Posterior cingulate gyrus (tissue), 11 donors: ENCODE measurements at regions of chr6 and their contacts with region 1.

Region 1: DNA sequence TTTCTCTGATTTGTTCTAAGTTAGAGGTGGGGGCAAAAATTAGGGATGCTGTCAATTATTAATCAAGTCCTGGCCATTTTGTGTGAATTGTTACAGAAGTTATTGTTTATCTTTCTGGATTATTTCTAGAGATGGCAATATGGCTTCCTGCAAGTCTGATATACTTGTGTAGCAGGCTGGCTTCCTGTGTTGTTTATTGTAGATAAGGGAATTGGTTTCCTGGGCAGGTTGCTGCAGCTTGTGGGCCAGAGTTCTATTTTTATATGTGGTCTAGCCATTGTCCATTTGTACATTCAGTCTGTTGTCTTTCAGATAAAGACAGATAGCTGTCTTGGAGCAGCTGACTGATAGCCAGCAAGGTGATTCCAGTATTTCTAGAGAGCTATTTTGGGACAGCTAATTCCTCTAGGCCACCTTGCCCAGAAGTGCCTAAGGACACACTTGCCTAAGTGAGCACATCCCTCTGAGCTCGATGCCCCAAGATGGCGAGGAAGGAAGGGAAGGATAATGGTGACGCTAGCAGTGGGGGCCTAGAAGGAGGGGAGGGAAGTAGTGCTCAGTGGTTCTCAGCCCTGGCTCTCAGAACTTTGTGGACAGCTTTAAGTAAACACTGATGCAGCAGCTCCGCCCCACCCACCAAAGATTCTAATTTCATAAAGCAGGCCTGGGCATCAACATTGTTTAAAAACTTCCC is 25.5 kb downstream of the DDO start:
- DNase-seq: no peak

Region 2: DNA sequence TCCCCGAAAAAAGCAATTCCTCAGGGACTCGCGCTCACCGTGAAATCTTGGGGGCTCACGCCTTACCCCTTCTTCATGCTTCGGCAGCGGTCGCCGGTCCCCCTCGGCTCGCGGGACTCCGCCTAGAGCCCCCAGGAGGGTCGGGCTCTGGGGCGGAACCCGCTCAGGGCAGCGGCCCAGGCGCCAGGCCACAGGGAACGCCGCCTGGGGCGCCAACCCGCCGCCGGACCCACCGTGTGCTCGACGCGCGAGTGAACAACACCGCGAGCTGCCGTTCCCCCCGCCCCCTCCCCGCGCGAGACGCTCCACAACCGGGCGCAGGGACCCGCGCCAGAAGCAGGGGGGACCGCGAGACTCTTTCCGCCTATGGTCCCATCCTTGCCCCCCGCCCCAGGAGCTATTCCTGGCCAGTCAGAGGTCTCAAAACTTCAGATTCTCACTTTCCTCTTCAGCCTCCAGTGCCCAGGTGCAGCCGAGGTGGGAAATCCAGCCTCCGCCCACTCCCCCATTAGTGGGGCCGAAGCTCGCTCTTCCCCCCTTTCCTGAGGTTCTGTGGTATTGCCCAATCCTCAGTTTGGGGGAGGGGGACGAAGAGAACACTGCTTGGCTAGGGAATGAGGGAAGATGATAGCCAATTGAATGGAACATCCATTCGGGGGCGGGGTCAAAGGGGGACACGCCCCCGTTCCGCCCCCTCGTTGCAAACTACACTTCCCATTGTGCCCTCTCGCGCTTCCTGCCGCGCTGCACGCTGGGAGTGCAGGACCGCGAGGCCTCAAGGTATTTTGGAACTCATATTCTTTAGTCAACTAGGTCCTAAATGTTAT is 210.2 kb before region 1 on chr6 and contains the start of gene WASF1:
- intact Hi-C with region 1: loop called (anchors 5 kb)
- DNase-seq: peak; percentile 91 to 99 (median 94)

Region 3: DNA sequence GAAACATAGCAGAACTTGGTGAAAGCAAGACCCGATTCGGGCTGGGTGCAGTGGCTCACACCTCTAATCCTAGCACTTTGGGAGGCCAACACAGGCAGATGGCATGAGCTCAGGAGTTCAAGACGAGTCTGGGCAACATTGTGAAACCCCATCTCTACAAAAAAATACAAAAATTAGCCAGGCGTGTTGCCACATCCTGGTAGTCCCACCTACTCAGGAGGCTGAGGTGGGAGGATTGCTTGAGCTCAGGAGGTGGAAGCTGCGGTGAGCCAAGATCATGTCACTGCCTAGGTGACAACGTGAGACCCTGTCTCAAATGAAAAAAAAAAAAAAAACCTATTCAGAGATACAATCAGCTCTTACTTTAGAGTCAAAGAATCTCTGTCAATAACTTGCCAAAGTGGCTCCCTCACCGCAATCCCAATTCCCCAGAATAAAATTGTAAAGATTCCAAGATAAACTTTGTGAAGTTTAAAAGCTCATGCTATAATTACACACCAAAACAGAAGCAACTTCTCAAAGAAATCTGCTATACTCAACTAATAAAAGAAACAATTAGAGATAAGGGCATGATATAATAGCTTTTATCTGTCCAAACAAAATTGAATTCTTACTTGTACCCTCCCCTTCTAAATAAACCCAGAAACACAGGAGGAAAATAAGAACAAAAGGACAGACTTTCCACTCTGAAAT is 391.8 kb after region 1 on chr6:
- intact Hi-C with region 1: no loop called
- DNase-seq: peak in 1 of 10 donors; percentile 40